Right cardiac atrium (tissue), 5 donors: ENCODE measurements at regions of chr19 and their contacts with region 1.

Region 1: DNA sequence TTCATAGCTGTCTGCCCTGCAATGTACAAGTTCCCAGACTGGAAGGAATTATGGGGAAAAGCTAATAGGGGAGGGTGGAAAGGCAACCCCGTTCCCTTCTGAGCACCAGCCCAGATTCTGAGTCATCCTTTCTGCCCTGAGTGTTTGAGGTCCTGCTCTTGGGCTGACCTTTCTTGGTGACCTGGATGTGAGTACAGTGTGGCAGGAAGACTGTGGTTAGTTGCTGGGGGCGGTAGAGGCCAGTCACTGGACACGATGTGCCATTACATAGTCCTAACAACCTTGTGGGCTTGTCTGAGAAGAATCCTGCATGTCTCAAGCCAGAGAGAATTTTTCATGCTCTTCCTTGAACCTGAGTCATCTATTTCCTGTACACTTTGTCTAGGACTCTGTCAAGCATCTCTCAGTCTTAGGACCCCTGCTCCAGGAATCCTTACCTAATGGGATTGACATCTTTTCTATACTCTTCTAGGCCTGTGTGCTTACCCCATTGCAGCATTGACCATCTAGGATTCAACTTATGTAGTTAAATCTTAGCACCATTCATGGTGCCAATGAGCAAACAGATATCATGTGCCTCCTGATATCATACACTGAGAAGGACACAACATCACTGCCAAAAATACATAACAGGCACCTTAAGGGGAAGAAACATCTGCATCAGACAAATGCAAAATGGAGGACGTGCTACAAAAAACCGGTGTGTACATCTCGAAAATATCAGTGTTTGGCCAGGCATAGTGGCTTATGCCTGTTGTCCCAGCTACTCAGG is 8.1 kb upstream of the ANGPTL4 start:
- DNase-seq: peak in 1 of 3 donors; percentile 64
- ATAC-seq: peak; percentile 48 to 89
- H3K4me3 ChIP-seq: no peak overlapping the region
- H3K27ac ChIP-seq: no peak overlapping the region
- H3K4me1 ChIP-seq: peaks cover 7% of the 10 kb centered on the region
- H3K27me3 ChIP-seq: no peaks in the 10 kb centered on the region

Region 2: DNA sequence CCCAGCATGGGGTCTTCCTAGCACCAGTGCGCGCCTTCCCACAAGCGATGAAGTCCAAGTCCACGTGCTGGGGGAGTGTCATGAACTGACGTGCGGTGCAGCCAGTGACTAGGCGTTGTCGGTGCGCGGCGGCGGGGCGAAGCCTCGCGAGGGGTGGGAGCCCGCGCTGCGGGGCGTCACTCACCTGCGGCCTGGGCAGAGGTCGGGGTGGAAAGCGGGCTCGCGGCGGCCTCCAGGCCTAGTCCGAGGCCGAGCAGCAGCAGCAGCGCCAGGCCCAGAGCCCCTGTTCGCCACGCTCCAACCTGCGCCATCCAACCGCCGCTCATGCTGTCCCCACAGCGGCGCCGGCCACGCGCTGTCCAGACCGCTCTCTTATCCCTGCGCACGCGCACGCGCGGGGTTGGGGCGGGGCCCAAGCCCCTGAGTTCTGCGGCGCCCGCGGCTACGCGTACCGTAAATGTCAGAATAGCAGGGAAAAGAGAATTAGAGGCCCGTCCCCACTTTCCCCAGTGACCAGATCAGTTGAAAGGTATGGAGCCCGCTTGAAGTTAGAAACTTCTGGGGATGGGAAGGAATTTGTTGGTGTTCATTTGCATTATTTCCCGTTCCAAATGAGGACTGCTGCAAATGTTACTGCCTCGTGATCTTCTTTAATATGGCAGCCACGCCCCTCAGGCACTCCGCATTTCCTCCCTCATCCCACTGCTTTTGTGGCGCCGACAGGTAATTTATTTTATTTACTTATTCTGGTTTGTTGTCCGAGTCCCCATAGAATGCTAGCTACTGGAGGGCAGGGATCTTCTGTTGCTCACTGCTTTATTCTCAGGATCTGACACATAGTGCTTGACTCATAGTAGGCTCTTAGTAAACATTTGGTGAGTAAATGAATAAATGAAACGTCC is 47.6 kb before region 1 on chr19 and contains the start of gene CD320:
- intact Hi-C with region 1: no loop called
- DNase-seq: peak; percentile 93 to 97 (median 97)
- ATAC-seq: peak; percentile 95 to 96
- H3K4me3 ChIP-seq: peak within 1 kb of the TSS; percentile 47
- H3K27ac ChIP-seq: peak within 1 kb of the TSS; percentile 25
- H3K4me1 ChIP-seq: peaks cover 2% of the 10 kb centered on the region
- H3K27me3 ChIP-seq: no peaks in the 10 kb centered on the region
- total RNA-seq, gene CD320: 28.9 to 37.4 (median 32.6) TPM

Region 3: GRCh38 chr19:8389891-8390616 is 34.2 kb after region 1 on chr19 and contains the start of gene RAB11B:
- intact Hi-C with region 1: loop called in 3 of 4 experiments (anchors 5 kb)
- DNase-seq: peak; percentile 99 to 100 (median 100)
- ATAC-seq: peak; percentile 91 to 96
- H3K4me3 ChIP-seq: peak within 1 kb of the TSS; percentile 97
- H3K27ac ChIP-seq: peak within 1 kb of the TSS; percentile 100
- H3K4me1 ChIP-seq: peaks cover 24% of the 10 kb centered on the region
- H3K27me3 ChIP-seq: no peaks in the 10 kb centered on the region
- total RNA-seq, gene RAB11B: 145 to 201 (median 158) TPM

Region 4: DNA sequence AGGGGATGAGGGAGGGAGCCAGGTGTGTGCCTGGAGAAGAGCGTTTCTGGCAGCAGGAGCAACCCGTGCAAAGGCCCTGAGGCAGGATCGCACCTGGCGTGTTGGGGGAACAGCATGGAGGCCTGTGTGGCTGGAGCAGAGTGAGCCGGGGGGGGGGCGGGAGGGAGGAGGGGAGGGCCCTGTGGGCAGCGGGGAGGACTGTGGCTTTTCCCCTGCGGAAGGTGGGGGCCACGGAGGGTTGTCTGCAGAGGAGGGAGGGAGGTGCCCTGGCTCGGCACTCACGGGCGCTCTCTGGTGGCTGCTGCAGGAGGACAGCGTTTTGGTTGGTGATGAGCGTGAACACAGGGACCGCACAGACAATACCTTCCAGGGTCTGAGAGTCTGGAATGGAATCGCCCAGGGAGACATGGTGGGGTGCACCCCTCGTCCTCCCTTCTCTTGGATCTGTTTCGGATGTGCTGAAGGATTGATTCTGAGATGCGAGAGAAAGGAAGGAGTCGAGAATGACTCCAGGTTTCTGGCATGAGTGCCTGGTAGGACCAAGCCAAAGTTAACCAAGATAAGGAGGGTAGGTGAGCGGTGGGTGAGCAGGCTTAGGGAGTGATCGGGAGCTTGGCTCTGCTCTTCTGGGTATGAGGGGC is 40.9 kb after region 1 on chr19:
- intact Hi-C with region 1: loop called (anchors 2 to 5 kb)
- DNase-seq: peak; percentile 79 to 90 (median 87)
- ATAC-seq: peak; percentile 38 to 55
- H3K4me3 ChIP-seq: no peak overlapping the region
- H3K27ac ChIP-seq: no peak overlapping the region
- H3K4me1 ChIP-seq: peaks cover 24% of the 10 kb centered on the region
- H3K27me3 ChIP-seq: no peaks in the 10 kb centered on the region

Region 5: DNA sequence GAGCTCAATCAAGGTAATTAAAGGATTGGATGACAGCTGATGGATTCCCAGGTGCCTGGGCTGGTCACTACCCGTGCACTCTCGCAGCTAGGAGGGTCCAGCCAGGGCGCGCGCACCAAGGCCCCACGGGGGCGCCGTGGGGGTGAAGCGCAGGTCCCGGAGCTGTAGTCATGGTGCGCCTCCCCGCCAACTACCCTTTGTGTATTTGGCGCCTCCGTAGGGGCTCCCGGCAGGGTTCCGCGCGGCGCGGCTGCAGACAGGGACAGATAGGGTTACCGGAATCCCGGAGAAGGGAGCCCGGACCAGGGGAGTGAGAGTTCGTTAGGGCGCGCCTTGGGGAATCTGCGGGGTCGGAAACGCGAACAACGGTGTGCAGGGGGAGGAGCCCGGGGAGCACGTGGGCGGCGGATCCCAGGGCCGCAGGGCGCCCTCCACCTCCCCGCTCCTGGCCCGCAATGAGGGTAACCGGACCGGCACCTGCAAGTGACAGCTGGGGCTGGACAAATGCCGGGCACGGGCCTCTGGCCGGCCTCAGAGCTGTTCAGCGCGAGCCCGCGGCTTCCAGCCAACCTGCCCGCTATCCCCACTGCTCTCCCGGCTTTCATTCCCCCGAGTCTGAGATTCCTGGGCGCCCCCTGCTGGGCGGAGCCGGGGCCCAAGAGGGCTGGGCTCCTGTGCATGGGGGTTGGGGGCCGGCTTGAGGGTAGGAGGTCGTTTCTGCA is 150.0 kb after region 1 on chr19:
- intact Hi-C with region 1: loop called in 2 of 4 experiments (anchors 5 kb)
- DNase-seq: peak; percentile 79 to 94 (median 92)
- ATAC-seq: peak; percentile 81 to 89
- H3K4me3 ChIP-seq: peak overlapping the region; percentile 51
- H3K27ac ChIP-seq: no peak overlapping the region
- H3K4me1 ChIP-seq: peaks cover 2% of the 10 kb centered on the region
- H3K27me3 ChIP-seq: no peaks in the 10 kb centered on the region

Region 6: GRCh38 chr19:8578642-8579265 is 222.9 kb after region 1 on chr19:
- intact Hi-C with region 1: loop called in 1 of 4 experiments (anchors 5 kb)
- DNase-seq: peak; percentile 77 to 92 (median 89)
- ATAC-seq: peak in 1 of 2 donors; percentile 31
- H3K4me3 ChIP-seq: no peak overlapping the region
- H3K27ac ChIP-seq: no peak overlapping the region
- H3K4me1 ChIP-seq: no peaks in the 10 kb centered on the region
- H3K27me3 ChIP-seq: no peaks in the 10 kb centered on the region